Heart left ventricle (tissue), 16 donors: ENCODE measurements at regions of chr18 and their contacts with region 1.

Region 1: DNA sequence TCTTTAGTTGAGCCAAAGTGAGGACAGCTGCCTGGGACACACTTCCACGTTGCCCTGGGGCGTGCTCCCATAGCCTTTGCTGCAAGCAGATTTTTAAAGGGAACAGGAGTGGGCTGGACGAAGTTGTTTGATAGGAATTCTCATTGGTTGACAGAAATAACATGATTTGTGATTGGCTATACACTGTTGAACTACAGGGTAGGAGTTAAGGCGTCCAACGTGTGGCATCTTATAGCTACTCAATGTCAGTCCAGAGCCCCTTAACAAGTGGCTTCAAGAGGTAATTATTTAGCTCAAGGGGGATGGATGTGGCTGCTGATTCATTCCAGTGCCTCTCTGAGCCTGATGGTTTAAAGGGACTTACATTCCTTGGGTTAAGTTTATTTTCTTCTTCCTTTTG is 65.5 kb downstream of the ACAA2 start:
- DNase-seq: no peak
- ATAC-seq: no peak
- H3K4me3 ChIP-seq: no peak overlapping the region
- H3K27ac ChIP-seq: no peak overlapping the region
- H3K4me1 ChIP-seq: no peaks in the 10 kb centered on the region
- H3K27me3 ChIP-seq: peaks cover 0 to 19% (median 2%) of the 10 kb centered on the region in 9 donors
- CTCF ChIP-seq: no peak
- POLR2A ChIP-seq: no peak

Region 2: DNA sequence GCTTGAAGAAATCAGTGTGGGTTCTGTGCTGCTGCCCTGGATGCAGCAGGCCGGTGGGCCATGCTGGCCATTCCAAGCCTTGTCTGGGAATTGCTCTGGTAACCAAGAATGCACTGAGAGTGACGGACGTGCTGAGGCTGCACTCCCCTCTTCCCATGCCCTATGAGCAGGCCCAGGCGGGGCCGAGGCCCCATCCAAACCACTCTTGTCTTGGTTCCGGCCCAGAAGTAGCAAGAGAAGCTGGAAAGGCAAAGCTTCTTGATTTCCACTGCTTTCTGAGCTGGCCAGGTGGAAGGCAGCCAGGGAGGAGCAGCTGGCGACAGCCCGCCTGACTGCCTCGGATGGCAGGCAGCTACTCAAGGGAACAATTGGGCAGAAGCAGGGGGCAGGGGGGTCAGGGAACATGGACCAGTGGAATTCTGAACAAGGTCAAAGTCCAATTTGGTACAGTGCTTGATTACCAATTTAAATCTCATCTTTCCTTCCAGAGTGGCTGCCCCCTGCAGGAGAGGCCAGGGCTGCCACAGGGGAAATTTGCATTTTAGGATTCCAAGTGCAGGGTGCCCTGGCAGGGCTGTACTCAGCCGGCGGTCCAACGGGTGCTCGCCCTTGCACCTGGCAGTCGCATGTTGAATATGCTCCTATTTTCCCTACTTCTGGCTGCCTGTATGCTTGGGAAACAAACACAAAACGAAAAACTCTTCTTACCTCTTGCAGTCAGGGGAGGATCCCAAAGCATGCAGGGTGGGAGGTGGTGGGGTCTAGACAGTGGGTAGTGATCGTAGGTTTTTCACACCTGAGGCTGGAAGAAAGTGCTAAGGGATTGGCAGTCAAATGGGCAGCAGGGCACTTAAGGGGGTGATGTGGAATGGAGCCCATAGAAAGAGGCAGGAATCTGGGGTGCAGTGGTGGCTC is 118.7 kb before region 1 on chr18:
- intact Hi-C with region 1: loop called in 1 of 10 experiments (anchors 10 kb)
- DNase-seq: peak in 3 of 5 donors; percentile 42 to 76 (median 45)
- ATAC-seq: peak in 2 of 4 donors; percentile 47 to 68
- H3K4me3 ChIP-seq: no peak overlapping the region
- H3K27ac ChIP-seq: no peak overlapping the region
- H3K4me1 ChIP-seq: peaks cover 0 to 5% (median 0%) of the 10 kb centered on the region in 12 donors
- H3K27me3 ChIP-seq: peaks cover 0 to 22% (median 0%) of the 10 kb centered on the region in 9 donors
- CTCF ChIP-seq: peak in 5 of 12 donors; percentile 8 to 30 (median 15)
- POLR2A ChIP-seq: no peak